OCI-LY7 (cell line): ENCODE measurements at regions of chr2 and their contacts with region 1.

Region 1: GRCh38 chr2:104849618-104850141 is 4.2 kb upstream of the POU3F3 start:
- DNase-seq: peak; percentile 74
- H3K4me3 ChIP-seq: no peak overlapping the region
- H3K27ac ChIP-seq: no peak overlapping the region
- H3K4me1 ChIP-seq: peaks cover 15% of the 10 kb centered on the region
- CTCF ChIP-seq: peak; percentile 91

Region 2: GRCh38 chr2:105037572-105038382 is 188.1 kb after region 1 on chr2 and contains the start of gene MRPS9:
- CTCF ChIA-PET with region 1: no interaction called
- POLR2A ChIA-PET with region 1: no interaction called
- intact Hi-C with region 1: loop called (anchors 5 kb)
- DNase-seq: peak; percentile 97
- H3K4me3 ChIP-seq: peak within 1 kb of the TSS; percentile 95
- H3K27ac ChIP-seq: peak within 1 kb of the TSS; percentile 39
- H3K4me1 ChIP-seq: peaks cover 22% of the 10 kb centered on the region
- CTCF ChIP-seq: no peak
- total RNA-seq, gene MRPS9: 25.9 and 32.1 TPM in 2 replicates